GM12878 (cell line): ENCODE measurements at regions of chr15 and their contacts with region 1.

Region 1: GRCh38 chr15:42650208-42651066 is 75.0 kb downstream of the STARD9 start:
- DNase-seq: peak; percentile 64
- ATAC-seq: peak; percentile 100
- H3K4me3 ChIP-seq: no peak overlapping the region
- H3K27ac ChIP-seq: no peak overlapping the region
- H3K4me1 ChIP-seq: 0 out of 2 replicates have a peak, but pooled peaks cover 3% of the 10 kb centered on the region
- H3K27me3 ChIP-seq: no peaks in the 10 kb centered on the region
- CTCF ChIP-seq: peak; percentile 80 to 95 (median 81); a peak in 5 of 6 replicates
- EP300 ChIP-seq: no peak
- POLR2A ChIP-seq: no peak
- RAD21 ChIP-seq: peak; percentile 95

Region 2: DNA sequence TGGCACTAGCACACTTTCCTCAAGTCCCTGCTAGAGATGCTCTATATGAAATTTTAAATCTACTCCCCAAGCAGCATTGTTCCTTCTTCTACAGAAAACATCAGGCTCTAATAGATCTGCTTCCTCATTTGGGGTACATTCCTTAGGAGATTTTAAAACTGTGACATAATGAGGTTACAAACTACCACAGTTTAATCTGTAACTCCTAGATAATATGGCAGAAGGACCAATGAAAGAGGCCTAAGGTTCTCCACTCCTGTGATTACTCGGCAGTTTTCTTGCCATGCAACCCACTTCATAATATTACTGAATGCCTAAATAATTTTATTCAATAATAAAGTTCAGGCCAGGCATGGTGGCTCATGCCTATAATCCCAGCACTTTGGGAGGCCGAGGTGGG is 175.6 kb before region 1 on chr15:
- CTCF ChIA-PET with region 1: interaction called, 10 read pairs
- POLR2A ChIA-PET with region 1: no interaction called
- RAD21 ChIA-PET with region 1: interaction called, 4 read pairs
- SMC1A ChIA-PET with region 1: interaction called, 5 read pairs
- in situ Hi-C with region 1: no loop called
- intact Hi-C with region 1: loop called (anchors 5 kb)
- DNase-seq: no peak
- ATAC-seq: no peak
- H3K4me3 ChIP-seq: no peak overlapping the region
- H3K27ac ChIP-seq: no peak overlapping the region
- H3K4me1 ChIP-seq: no peaks in the 10 kb centered on the region
- H3K27me3 ChIP-seq: no peaks in the 10 kb centered on the region
- CTCF ChIP-seq: no peak
- EP300 ChIP-seq: no peak
- POLR2A ChIP-seq: no peak
- RAD21 ChIP-seq: no peak

Region 3: GRCh38 chr15:42548253-42549031 is 102.0 kb before region 1 on chr15 and contains the starts of genes HAUS2 and LRRC57:
- CTCF ChIA-PET with region 1: interaction called, 6 read pairs
- POLR2A ChIA-PET with region 1: interaction called, 8 read pairs
- RAD21 ChIA-PET with region 1: interaction called, 9 read pairs
- SMC1A ChIA-PET with region 1: interaction called, 8 read pairs
- in situ Hi-C with region 1: no loop called
- intact Hi-C with region 1: loop called (anchors 2 kb)
- DNase-seq: peak; percentile 55
- ATAC-seq: peak; percentile 90
- H3K4me3 ChIP-seq: peak within 1 kb of the TSS; percentile 76
- H3K27ac ChIP-seq: peak within 1 kb of the TSS; percentile 72
- H3K4me1 ChIP-seq: no peaks in the 10 kb centered on the region; the same call in 1 of the 2 replicates
- H3K27me3 ChIP-seq: no peaks in the 10 kb centered on the region
- CTCF ChIP-seq: no peak
- EP300 ChIP-seq: no peak
- POLR2A ChIP-seq: peak; percentile 97
- RAD21 ChIP-seq: no peak
- polyA plus RNA-seq, gene HAUS2: 30.8 to 37.0 TPM
- polyA plus RNA-seq, gene LRRC57: 5.2 to 5.8 TPM

Region 4: GRCh38 chr15:42558739-42559138 is 91.7 kb before region 1 on chr15:
- CTCF ChIA-PET with region 1: interaction called, 3 read pairs
- POLR2A ChIA-PET with region 1: no interaction called
- RAD21 ChIA-PET with region 1: no interaction called
- SMC1A ChIA-PET with region 1: interaction called, 3 read pairs
- in situ Hi-C with region 1: no loop called
- intact Hi-C with region 1: loop called (anchors 5 kb)
- DNase-seq: no peak
- ATAC-seq: no peak
- H3K4me3 ChIP-seq: no peak overlapping the region
- H3K27ac ChIP-seq: no peak overlapping the region
- H3K4me1 ChIP-seq: no peaks in the 10 kb centered on the region
- H3K27me3 ChIP-seq: no peaks in the 10 kb centered on the region
- CTCF ChIP-seq: no peak
- EP300 ChIP-seq: no peak
- POLR2A ChIP-seq: no peak
- RAD21 ChIP-seq: no peak

Region 5: DNA sequence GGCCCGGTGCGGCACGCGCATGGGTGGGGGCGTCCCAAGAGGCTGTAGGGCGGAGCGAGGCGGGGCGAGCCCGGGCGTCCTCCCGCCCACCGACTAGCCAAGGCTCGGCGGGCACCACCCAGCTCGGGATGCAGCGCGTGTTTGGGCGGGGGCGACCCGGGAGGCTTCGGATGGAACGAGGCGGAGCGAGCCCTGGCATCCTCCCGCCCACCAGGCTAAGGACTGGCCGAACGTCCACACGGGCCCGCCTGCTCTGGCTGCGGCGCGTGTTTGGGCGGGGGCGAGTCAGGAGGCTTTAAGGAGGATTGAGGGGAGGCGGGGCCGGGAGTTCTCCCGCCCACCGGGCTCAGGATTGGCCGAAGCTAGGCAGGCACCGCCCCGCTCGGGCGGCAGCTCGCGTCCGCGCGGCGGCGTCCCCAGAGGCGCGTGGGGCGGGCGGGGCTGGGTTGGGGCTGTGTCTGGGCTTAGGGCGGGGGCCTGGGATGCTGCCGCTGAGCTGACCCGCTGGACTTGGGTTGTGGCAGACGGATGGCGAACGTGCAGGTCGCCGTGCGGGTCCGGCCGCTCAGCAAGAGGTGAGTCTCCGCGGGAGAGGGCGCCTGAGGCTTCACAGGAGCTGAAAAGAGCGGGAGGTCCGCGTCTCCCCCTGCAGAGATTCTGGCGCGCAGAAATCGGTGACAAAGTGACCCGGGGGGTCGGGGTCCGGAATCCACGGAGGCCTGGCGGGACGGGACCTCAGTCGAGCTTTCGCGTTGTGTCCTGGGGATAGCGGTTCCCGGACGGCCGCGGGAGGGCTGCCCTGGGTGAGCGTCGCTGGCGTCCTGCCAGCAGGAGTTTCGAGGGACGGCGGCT is 75.0 kb before region 1 on chr15 and contains the start of gene STARD9:
- CTCF ChIA-PET with region 1: interaction called, 4 read pairs
- POLR2A ChIA-PET with region 1: interaction called, 8 read pairs
- RAD21 ChIA-PET with region 1: interaction called, 9 read pairs
- SMC1A ChIA-PET with region 1: interaction called, 9 read pairs
- in situ Hi-C with region 1: no loop called
- intact Hi-C with region 1: loop called (anchors 5 kb)
- DNase-seq: peak; percentile 87
- ATAC-seq: peak; percentile 94
- H3K4me3 ChIP-seq: peak within 1 kb of the TSS; percentile 89
- H3K27ac ChIP-seq: peak within 1 kb of the TSS; percentile 57; the same call in 1 of the 2 replicates
- H3K4me1 ChIP-seq: peaks cover 24% of the 10 kb centered on the region
- H3K27me3 ChIP-seq: no peaks in the 10 kb centered on the region
- CTCF ChIP-seq: no peak; a peak in 1 of 6 replicates
- EP300 ChIP-seq: no peak
- POLR2A ChIP-seq: peak; percentile 97
- RAD21 ChIP-seq: no peak
- polyA plus RNA-seq, gene STARD9: 0.58 to 1.1 TPM

Region 6: GRCh38 chr15:42608110-42608531 is 42.3 kb before region 1 on chr15:
- CTCF ChIA-PET with region 1: interaction called, 5 read pairs
- POLR2A ChIA-PET with region 1: interaction called, 4 read pairs
- RAD21 ChIA-PET with region 1: interaction called, 9 read pairs
- SMC1A ChIA-PET with region 1: interaction called, 11 read pairs
- in situ Hi-C with region 1: no loop called
- intact Hi-C with region 1: no loop called
- DNase-seq: peak; percentile 71
- ATAC-seq: peak; percentile 82
- H3K4me3 ChIP-seq: no peak overlapping the region
- H3K27ac ChIP-seq: peak overlapping the region; percentile 50
- H3K4me1 ChIP-seq: peaks cover 45% of the 10 kb centered on the region
- H3K27me3 ChIP-seq: no peaks in the 10 kb centered on the region
- CTCF ChIP-seq: no peak
- EP300 ChIP-seq: peak in 1 of 2 experiments; percentile 52; a peak in 1 of 4 replicates
- POLR2A ChIP-seq: no peak
- RAD21 ChIP-seq: no peak

Region 7: DNA sequence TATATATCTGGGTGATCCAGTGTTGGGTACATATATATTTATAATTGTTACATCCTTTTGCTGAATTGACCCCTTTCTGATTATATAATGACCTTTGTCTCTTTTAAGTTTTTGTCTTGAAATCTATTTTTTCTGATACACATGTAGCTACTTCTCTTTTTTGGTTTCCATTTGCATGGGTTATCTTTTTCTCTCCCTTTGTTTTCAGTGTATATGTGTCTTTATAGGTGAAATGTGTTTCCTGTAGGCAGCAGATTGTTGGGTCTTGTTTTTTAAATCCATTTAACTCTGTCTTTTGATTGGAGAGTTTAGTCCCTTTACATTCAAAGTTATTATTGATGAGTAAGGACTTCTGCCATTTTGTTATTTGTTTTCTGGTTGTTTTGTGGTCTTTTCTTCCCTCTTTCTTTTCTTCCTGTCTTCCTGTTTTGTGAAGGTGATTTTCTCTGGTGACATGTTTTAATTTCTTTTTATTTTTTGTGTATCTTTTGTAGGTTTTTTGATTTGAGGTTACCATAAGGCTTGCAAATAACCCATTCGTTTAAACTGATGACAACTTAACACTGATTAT is 18.2 kb before region 1 on chr15:
- CTCF ChIA-PET with region 1: no interaction called
- POLR2A ChIA-PET with region 1: no interaction called
- RAD21 ChIA-PET with region 1: interaction called, 4 read pairs
- SMC1A ChIA-PET with region 1: interaction called, 11 read pairs
- in situ Hi-C with region 1: no loop called
- intact Hi-C with region 1: no loop called
- DNase-seq: no peak
- ATAC-seq: peak; percentile 47
- H3K4me3 ChIP-seq: peak overlapping the region; percentile 14; the same call in 1 of the 2 replicates
- H3K27ac ChIP-seq: peak overlapping the region; percentile 31; the same call in 1 of the 2 replicates
- H3K4me1 ChIP-seq: peaks cover 7% of the 10 kb centered on the region
- H3K27me3 ChIP-seq: no peaks in the 10 kb centered on the region
- CTCF ChIP-seq: no peak
- EP300 ChIP-seq: no peak
- POLR2A ChIP-seq: no peak
- RAD21 ChIP-seq: no peak

Region 8: GRCh38 chr15:43279491-43279890 is 629.1 kb after region 1 on chr15:
- CTCF ChIA-PET with region 1: no interaction called
- POLR2A ChIA-PET with region 1: no interaction called
- RAD21 ChIA-PET with region 1: no interaction called
- SMC1A ChIA-PET with region 1: no interaction called
- in situ Hi-C with region 1: no loop called
- intact Hi-C with region 1: no loop called
- DNase-seq: no peak
- ATAC-seq: no peak
- H3K4me3 ChIP-seq: no peak overlapping the region
- H3K27ac ChIP-seq: no peak overlapping the region
- H3K4me1 ChIP-seq: no peaks in the 10 kb centered on the region
- H3K27me3 ChIP-seq: no peaks in the 10 kb centered on the region
- CTCF ChIP-seq: no peak
- EP300 ChIP-seq: no peak
- POLR2A ChIP-seq: no peak
- RAD21 ChIP-seq: no peak